Natural killer cell (primary cell): ENCODE measurements at regions of chr13 and their contacts with region 1.

Region 1: GRCh38 chr13:49247643-49248621 is at the start of gene CDADC1:
- DNase-seq: peak; percentile 91 to 94
- ATAC-seq: peak; percentile 87 to 94 (median 93)
- H3K4me3 ChIP-seq: peak within 1 kb of the TSS; percentile 68
- H3K4me3 Mint-ChIP-seq: peak within 1 kb of the TSS; percentile 99
- H3K27ac ChIP-seq: peak within 1 kb of the TSS; percentile 76
- H3K27ac Mint-ChIP-seq: peak within 1 kb of the TSS; percentile 97 to 99
- H3K4me1 ChIP-seq: peaks cover 13% of the 10 kb centered on the region
- H3K4me1 Mint-ChIP-seq: peaks cover 21 to 28% of the 10 kb centered on the region in 2 donors
- H3K27me3 ChIP-seq: no peaks in the 10 kb centered on the region
- H3K27me3 Mint-ChIP-seq: peaks cover 0 to 5% of the 10 kb centered on the region in 2 donors
- CTCF ChIP-seq: no peak
- total RNA-seq, gene CDADC1: 32.0 to 39.4 (median 33.6) TPM

Region 2: GRCh38 chr13:49258089-49258796 is 10.3 kb after region 1 on chr13:
- intact Hi-C with region 1: loop called (anchors 1 kb)
- DNase-seq: peak in 1 of 2 donors; percentile 52
- ATAC-seq: peak; percentile 41 to 72 (median 67)
- H3K4me3 ChIP-seq: peak overlapping the region; percentile 58
- H3K4me3 Mint-ChIP-seq: peak overlapping the region; percentile 87
- H3K27ac ChIP-seq: peak overlapping the region; percentile 64
- H3K27ac Mint-ChIP-seq: peak overlapping the region; percentile 82 to 91
- H3K4me1 ChIP-seq: peaks cover 4% of the 10 kb centered on the region
- H3K4me1 Mint-ChIP-seq: peaks cover 9 to 24% of the 10 kb centered on the region in 2 donors
- H3K27me3 ChIP-seq: no peaks in the 10 kb centered on the region
- H3K27me3 Mint-ChIP-seq: no peaks in the 10 kb centered on the region
- CTCF ChIP-seq: no peak